Body of pancreas (tissue), 4 donors: ENCODE measurements at regions of chr19 and their contacts with region 1.

Region 1: GRCh38 chr19:13234518-13234917 is 84.3 kb downstream of the IER2 start:
- DNase-seq: peak; percentile 38 to 69 (median 62)
- ATAC-seq: peak; percentile 58
- H3K4me3 ChIP-seq: no peak overlapping the region
- H3K27ac ChIP-seq: no peak overlapping the region
- H3K4me1 ChIP-seq: peaks cover 7% of the 10 kb centered on the region
- H3K27me3 ChIP-seq: no peaks in the 10 kb centered on the region
- CTCF ChIP-seq: peak in 6 of 7 experiments; percentile 18 to 85 (median 59)
- POLR2A ChIP-seq: no peak

Region 2: DNA sequence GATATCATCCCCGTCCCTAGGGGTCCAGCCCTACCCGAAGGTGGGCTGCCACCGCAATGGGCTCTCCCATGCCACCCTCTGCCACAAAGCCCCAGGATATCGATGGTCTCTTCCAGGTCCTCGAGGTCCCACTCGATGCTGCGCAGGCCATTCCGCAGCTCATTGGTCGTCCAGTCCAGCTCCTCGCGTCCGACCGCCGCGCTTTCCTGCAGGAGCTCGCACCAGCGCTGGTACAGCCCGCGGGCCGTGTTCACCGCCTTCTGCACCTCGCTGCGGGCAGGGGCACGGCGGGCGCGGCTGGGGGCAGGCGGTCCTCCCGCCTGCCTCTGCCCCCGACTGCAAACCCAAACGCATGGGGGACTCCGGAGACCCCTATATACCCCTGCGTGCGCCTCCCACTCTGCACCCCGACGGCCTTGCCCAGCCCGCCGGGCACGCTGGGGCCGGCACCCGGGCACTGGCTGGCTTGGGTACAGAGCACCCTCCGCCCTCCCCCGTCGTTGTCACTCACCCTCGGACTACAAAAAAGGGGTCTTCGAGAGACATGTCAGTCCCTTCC is 84.8 kb before region 1 on chr19:
- intact Hi-C with region 1: loop called (anchors 10 kb)
- DNase-seq: peak; percentile 63 to 70 (median 66)
- ATAC-seq: peak; percentile 1
- H3K4me3 ChIP-seq: peak overlapping the region; percentile 43 to 68
- H3K27ac ChIP-seq: peak overlapping the region; percentile 37 to 100 (median 99)
- H3K4me1 ChIP-seq: peaks cover 19% of the 10 kb centered on the region
- H3K27me3 ChIP-seq: no peaks in the 10 kb centered on the region
- CTCF ChIP-seq: no peak
- POLR2A ChIP-seq: no peak

Region 3: DNA sequence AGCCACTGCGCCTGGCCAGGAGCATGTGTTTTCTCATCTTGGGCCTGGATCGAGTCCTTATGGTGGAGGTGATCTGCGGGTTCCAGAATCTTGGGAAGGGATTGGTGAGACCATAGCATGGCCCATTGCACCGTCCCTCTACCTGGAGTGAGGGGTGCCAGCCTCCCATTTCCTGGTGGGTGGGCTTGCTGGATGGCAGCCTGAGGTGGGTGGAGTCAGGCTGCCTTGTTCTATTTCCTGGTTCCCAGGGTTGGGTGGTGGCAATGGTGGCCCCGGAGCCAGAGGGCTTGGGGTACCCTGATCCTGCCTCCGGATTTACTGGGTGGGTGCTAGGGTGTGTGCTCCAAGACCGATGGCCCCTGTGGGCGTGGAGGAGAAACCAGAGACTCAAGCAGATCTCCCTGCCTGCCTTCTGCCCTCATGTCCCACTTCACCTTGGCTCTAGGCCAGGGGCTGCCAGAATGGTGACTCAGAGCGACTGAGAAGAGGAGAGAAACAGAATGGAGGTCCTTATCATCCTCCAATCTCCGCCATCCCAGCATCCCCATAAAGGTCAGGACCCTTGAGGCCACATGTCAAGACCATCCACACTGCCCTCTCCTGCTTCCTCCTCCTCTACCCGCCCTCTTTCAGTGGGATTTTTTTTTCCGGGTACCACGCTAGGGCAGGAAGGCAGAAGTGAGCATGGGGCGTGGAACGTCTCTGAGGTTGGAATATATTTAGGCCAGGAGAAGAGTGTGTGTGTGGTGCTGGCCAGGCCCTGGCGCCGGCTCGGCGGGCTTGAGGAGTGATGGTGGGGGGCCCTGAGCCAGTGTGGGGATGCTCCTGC is 62.2 kb before region 1 on chr19:
- intact Hi-C with region 1: no loop called
- DNase-seq: peak; percentile 71 to 86 (median 78)
- ATAC-seq: no peak
- H3K4me3 ChIP-seq: no peak overlapping the region
- H3K27ac ChIP-seq: peak overlapping the region; percentile 51 to 73 (median 60)
- H3K4me1 ChIP-seq: peaks cover 24% of the 10 kb centered on the region
- H3K27me3 ChIP-seq: no peaks in the 10 kb centered on the region
- CTCF ChIP-seq: no peak
- POLR2A ChIP-seq: no peak